HEK293T (cell line): ENCODE measurements at regions of chr1 and their contacts with region 1.

Region 1: GRCh38 chr1:156838981-156839410 is 19.9 kb downstream of the INSRR start:
- DNase-seq: peak; percentile 86

Region 2: GRCh38 chr1:156797212-156797871 is 41.7 kb before region 1 on chr1:
- CTCF ChIA-PET with region 1: interaction called, 11 read pairs
- POLR2A ChIA-PET with region 1: no interaction called
- DNase-seq: peak; percentile 68

Region 3: GRCh38 chr1:156852418-156852874 is 13.4 kb after region 1 on chr1:
- CTCF ChIA-PET with region 1: interaction called, 10 read pairs
- POLR2A ChIA-PET with region 1: no interaction called
- DNase-seq: no peak

Region 4: GRCh38 chr1:156860113-156860627 is 21.2 kb after region 1 on chr1:
- CTCF ChIA-PET with region 1: interaction called, 62 read pairs
- POLR2A ChIA-PET with region 1: interaction called, 5 read pairs
- DNase-seq: peak; percentile 86

Region 5: GRCh38 chr1:156892190-156893047 is 53.4 kb after region 1 on chr1:
- CTCF ChIA-PET with region 1: interaction called, 35 read pairs
- POLR2A ChIA-PET with region 1: interaction called, 3 read pairs
- DNase-seq: peak; percentile 96